ENCODE measurements at regions of chr17 and their contacts with region 1.

Region 1: GRCh38 chr17:50841949-50842354 is 6.6 kb downstream of the WFIKKN2 start:
- DNase-seq: peak; percentile 83
- ATAC-seq: peak; percentile 90
- H3K4me3 Mint-ChIP-seq: no peak overlapping the region
- H3K27ac Mint-ChIP-seq: no peak overlapping the region
- H3K4me1 Mint-ChIP-seq: peaks cover 9% of the 10 kb centered on the region
- H3K27me3 Mint-ChIP-seq: no peaks in the 10 kb centered on the region
- CTCF ChIP-seq: 0 out of 2 replicates have a peak, but pooled peaks have one; percentile 44

Region 2: DNA sequence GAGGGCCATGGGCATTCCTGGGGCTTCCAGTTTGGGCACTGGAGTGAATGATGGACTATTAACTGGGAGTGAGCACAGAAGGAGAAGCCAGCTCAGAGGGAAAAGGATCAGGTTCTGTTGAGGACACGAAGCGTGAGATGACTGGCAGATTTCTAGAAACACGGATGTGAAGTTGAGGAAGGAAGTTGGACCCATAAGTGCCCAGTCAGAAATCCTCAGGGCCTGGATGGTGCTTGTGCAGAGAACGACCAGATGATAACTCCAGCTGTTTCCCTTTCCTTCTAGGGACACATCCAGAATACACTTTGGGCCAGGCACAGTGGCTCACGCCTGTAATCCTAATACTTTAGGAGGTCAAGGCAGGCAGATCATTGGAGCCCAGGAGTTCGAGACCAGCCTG is 51.3 kb before region 1 on chr17:
- CTCF ChIA-PET with region 1: interaction called, 233 read pairs
- POLR2A ChIA-PET with region 1: no interaction called
- DNase-seq: no peak
- ATAC-seq: no peak
- H3K4me3 Mint-ChIP-seq: no peak overlapping the region
- H3K27ac Mint-ChIP-seq: peak overlapping the region; percentile 2
- H3K4me1 Mint-ChIP-seq: peaks cover 14% of the 10 kb centered on the region
- H3K27me3 Mint-ChIP-seq: no peaks in the 10 kb centered on the region
- CTCF ChIP-seq: no peak

Region 3: GRCh38 chr17:50816771-50817751 is 24.9 kb before region 1 on chr17:
- CTCF ChIA-PET with region 1: interaction called, 18 read pairs
- POLR2A ChIA-PET with region 1: no interaction called
- DNase-seq: peak; percentile 55
- ATAC-seq: peak; percentile 79
- H3K4me3 Mint-ChIP-seq: no peak overlapping the region
- H3K27ac Mint-ChIP-seq: no peak overlapping the region
- H3K4me1 Mint-ChIP-seq: peaks cover 10% of the 10 kb centered on the region
- H3K27me3 Mint-ChIP-seq: no peaks in the 10 kb centered on the region
- CTCF ChIP-seq: peak; percentile 69

Region 4: GRCh38 chr17:50853015-50853615 is 11.2 kb after region 1 on chr17:
- CTCF ChIA-PET with region 1: interaction called, 30 read pairs
- POLR2A ChIA-PET with region 1: no interaction called
- DNase-seq: no peak
- ATAC-seq: no peak
- H3K4me3 Mint-ChIP-seq: no peak overlapping the region
- H3K27ac Mint-ChIP-seq: peak overlapping the region; percentile 3; the same call in 1 of the 2 replicates
- H3K4me1 Mint-ChIP-seq: peaks cover 11% of the 10 kb centered on the region
- H3K27me3 Mint-ChIP-seq: no peaks in the 10 kb centered on the region; the same call in 1 of the 2 replicates
- CTCF ChIP-seq: no peak

Region 5: DNA sequence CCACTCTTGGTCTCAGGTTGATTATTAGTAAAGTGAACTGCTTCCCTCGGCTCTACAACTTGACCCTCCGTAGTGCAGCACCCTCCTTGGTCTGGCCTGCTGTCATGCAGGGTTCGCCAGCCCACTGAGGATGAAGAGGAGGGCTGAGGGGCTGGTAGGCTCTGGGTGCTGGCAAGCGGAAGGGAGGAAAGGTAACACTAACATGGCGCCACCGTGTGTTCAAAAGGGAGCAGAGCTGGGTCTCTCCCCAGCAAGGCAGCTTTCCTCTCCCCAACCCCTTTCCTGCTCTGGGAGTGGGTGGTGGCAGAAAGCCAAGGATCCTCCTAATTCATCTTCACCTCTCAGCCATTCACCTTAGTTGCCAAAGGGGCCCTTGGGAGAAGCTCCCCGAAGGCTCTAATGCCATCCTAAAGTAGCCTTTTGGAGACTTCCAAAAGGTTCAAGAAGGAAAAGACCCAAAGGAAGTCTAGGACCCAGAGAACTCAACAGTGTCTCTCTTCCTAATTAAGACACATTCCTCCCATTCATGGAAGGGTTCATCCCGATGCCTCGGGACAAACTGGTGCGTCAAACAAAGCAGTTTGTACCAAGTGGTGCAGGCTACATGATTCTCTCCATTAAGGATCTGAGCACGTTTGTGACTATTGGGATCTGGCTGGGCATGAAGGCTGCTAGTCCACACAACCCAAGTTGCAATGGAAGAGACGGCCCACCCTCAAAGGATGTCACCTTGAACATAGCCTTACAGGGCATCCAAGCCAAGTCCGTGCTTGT is 115.0 kb after region 1 on chr17:
- CTCF ChIA-PET with region 1: interaction called, 15 read pairs
- POLR2A ChIA-PET with region 1: interaction called, 3 read pairs
- DNase-seq: peak; percentile 79
- ATAC-seq: peak; percentile 89
- H3K4me3 Mint-ChIP-seq: no peak overlapping the region
- H3K27ac Mint-ChIP-seq: 0 out of 2 replicates have a peak overlapping the region, but pooled peaks have one; percentile 19
- H3K4me1 Mint-ChIP-seq: peaks cover 36% of the 10 kb centered on the region
- H3K27me3 Mint-ChIP-seq: no peaks in the 10 kb centered on the region
- CTCF ChIP-seq: peak; percentile 44; the same call in 1 of the 2 replicates